T-cell (primary cell): ENCODE measurements at regions of chr12 and their contacts with region 1.

Region 1: GRCh38 chr12:95102916-95103671 is 29.7 kb upstream of the NR2C1 start:
- DNase-seq: peak in 1 of 35 experiments; percentile 9
- ATAC-seq: peak; percentile 47 to 95 (median 83)
- H3K4me3 ChIP-seq: no peak overlapping the region
- H3K4me3 Mint-ChIP-seq: peak overlapping the region in 1 of 3 donors; percentile 4
- H3K27ac ChIP-seq: no peak overlapping the region
- H3K27ac Mint-ChIP-seq: peak overlapping the region; percentile 63 to 74
- H3K4me1 ChIP-seq: no peaks in the 10 kb centered on the region
- H3K4me1 Mint-ChIP-seq: peaks cover 0 to 11% (median 8%) of the 10 kb centered on the region in 3 donors
- H3K27me3 ChIP-seq: no peaks in the 10 kb centered on the region
- H3K27me3 Mint-ChIP-seq: no peaks in the 10 kb centered on the region

Region 2: DNA sequence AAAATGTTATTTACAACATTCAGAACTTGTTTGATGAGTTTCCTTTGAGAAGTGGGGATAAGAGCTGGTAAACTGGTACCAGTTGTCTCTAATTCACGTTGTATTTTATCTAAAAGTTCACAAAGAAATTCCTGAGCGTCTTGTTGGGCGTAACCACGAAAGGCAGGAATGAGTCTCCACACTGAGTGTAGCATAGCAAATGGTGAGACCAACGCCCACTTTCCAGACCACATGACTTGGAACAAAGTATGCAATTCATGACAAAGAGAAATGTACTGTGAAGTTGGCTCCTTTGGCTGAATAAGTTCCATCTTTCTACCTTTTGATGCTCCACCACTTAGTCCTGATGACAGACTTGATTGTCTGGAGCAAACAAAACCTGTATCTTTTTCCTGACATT is 429.8 kb after region 1 on chr12:
- CTCF ChIA-PET with region 1: interaction called in 1 of 2 experiments, 13 read pairs
- POLR2A ChIA-PET with region 1: no interaction called
- DNase-seq: no peak
- ATAC-seq: no peak
- H3K4me3 ChIP-seq: no peak overlapping the region
- H3K4me3 Mint-ChIP-seq: no peak overlapping the region
- H3K27ac ChIP-seq: no peak overlapping the region
- H3K27ac Mint-ChIP-seq: no peak overlapping the region
- H3K4me1 ChIP-seq: no peaks in the 10 kb centered on the region
- H3K4me1 Mint-ChIP-seq: peaks cover 9 to 28% (median 19%) of the 10 kb centered on the region in 3 donors
- H3K27me3 ChIP-seq: no peaks in the 10 kb centered on the region
- H3K27me3 Mint-ChIP-seq: no peaks in the 10 kb centered on the region